Natural killer cell (primary cell): ENCODE measurements at regions of chr1 and their contacts with region 1.

Region 1: GRCh38 chr1:26541816-26542711 is 12.5 kb downstream of the RPS6KA1 start:
- DNase-seq: peak; percentile 78 to 86
- ATAC-seq: peak; percentile 65 to 84 (median 77)
- H3K4me3 ChIP-seq: peak overlapping the region; percentile 23
- H3K4me3 Mint-ChIP-seq: peak overlapping the region; percentile 87
- H3K27ac ChIP-seq: peak overlapping the region; percentile 98
- H3K27ac Mint-ChIP-seq: peak overlapping the region; percentile 99
- H3K4me1 ChIP-seq: peaks cover 98% of the 10 kb centered on the region
- H3K4me1 Mint-ChIP-seq: peaks cover 79 to 84% of the 10 kb centered on the region in 2 donors
- H3K27me3 ChIP-seq: no peaks in the 10 kb centered on the region
- H3K27me3 Mint-ChIP-seq: no peaks in the 10 kb centered on the region
- CTCF ChIP-seq: peak; percentile 52

Region 2: GRCh38 chr1:26111530-26112406 is 430.3 kb before region 1 on chr1 and contains the start of gene PDIK1L:
- intact Hi-C with region 1: loop called (anchors 10 kb)
- DNase-seq: peak; percentile 91 to 98
- ATAC-seq: peak; percentile 85 to 96 (median 88)
- H3K4me3 ChIP-seq: peak within 1 kb of the TSS; percentile 99
- H3K4me3 Mint-ChIP-seq: peak within 1 kb of the TSS; percentile 91
- H3K27ac ChIP-seq: peak within 1 kb of the TSS; percentile 66
- H3K27ac Mint-ChIP-seq: peak within 1 kb of the TSS; percentile 62 to 84
- H3K4me1 ChIP-seq: peaks cover 13% of the 10 kb centered on the region
- H3K4me1 Mint-ChIP-seq: peaks cover 13 to 14% of the 10 kb centered on the region in 2 donors
- H3K27me3 ChIP-seq: no peaks in the 10 kb centered on the region
- H3K27me3 Mint-ChIP-seq: no peaks in the 10 kb centered on the region
- CTCF ChIP-seq: no peak
- total RNA-seq, gene PDIK1L: 3.1 to 8.2 (median 8.1) TPM

Region 3: GRCh38 chr1:26459573-26460031 is 82.5 kb before region 1 on chr1:
- intact Hi-C with region 1: no loop called
- DNase-seq: no peak
- ATAC-seq: no peak
- H3K4me3 ChIP-seq: no peak overlapping the region
- H3K4me3 Mint-ChIP-seq: no peak overlapping the region
- H3K27ac ChIP-seq: no peak overlapping the region
- H3K27ac Mint-ChIP-seq: no peak overlapping the region
- H3K4me1 ChIP-seq: no peaks in the 10 kb centered on the region
- H3K4me1 Mint-ChIP-seq: no peaks in the 10 kb centered on the region
- H3K27me3 ChIP-seq: no peaks in the 10 kb centered on the region
- H3K27me3 Mint-ChIP-seq: no peaks in the 10 kb centered on the region
- CTCF ChIP-seq: no peak

Region 4: GRCh38 chr1:26477446-26478152 is 64.5 kb before region 1 on chr1:
- intact Hi-C with region 1: no loop called
- DNase-seq: no peak
- ATAC-seq: no peak
- H3K4me3 ChIP-seq: no peak overlapping the region
- H3K4me3 Mint-ChIP-seq: no peak overlapping the region
- H3K27ac ChIP-seq: no peak overlapping the region
- H3K27ac Mint-ChIP-seq: peak overlapping the region; percentile 52 to 79
- H3K4me1 ChIP-seq: peaks cover 10% of the 10 kb centered on the region
- H3K4me1 Mint-ChIP-seq: peaks cover 16 to 24% of the 10 kb centered on the region in 2 donors
- H3K27me3 ChIP-seq: no peaks in the 10 kb centered on the region
- H3K27me3 Mint-ChIP-seq: no peaks in the 10 kb centered on the region
- CTCF ChIP-seq: no peak

Region 5: GRCh38 chr1:26500488-26501175 is 41.4 kb before region 1 on chr1:
- intact Hi-C with region 1: loop called (anchors 2 kb)
- DNase-seq: peak; percentile 85 to 89
- ATAC-seq: peak; percentile 76 to 89 (median 79)
- H3K4me3 ChIP-seq: peak overlapping the region; percentile 82
- H3K4me3 Mint-ChIP-seq: peak overlapping the region; percentile 85
- H3K27ac ChIP-seq: peak overlapping the region; percentile 91
- H3K27ac Mint-ChIP-seq: peak overlapping the region; percentile 76 to 77
- H3K4me1 ChIP-seq: peaks cover 15% of the 10 kb centered on the region
- H3K4me1 Mint-ChIP-seq: peaks cover 0 to 16% of the 10 kb centered on the region in 2 donors
- H3K27me3 ChIP-seq: no peaks in the 10 kb centered on the region
- H3K27me3 Mint-ChIP-seq: no peaks in the 10 kb centered on the region
- CTCF ChIP-seq: peak; percentile 50

Region 6: DNA sequence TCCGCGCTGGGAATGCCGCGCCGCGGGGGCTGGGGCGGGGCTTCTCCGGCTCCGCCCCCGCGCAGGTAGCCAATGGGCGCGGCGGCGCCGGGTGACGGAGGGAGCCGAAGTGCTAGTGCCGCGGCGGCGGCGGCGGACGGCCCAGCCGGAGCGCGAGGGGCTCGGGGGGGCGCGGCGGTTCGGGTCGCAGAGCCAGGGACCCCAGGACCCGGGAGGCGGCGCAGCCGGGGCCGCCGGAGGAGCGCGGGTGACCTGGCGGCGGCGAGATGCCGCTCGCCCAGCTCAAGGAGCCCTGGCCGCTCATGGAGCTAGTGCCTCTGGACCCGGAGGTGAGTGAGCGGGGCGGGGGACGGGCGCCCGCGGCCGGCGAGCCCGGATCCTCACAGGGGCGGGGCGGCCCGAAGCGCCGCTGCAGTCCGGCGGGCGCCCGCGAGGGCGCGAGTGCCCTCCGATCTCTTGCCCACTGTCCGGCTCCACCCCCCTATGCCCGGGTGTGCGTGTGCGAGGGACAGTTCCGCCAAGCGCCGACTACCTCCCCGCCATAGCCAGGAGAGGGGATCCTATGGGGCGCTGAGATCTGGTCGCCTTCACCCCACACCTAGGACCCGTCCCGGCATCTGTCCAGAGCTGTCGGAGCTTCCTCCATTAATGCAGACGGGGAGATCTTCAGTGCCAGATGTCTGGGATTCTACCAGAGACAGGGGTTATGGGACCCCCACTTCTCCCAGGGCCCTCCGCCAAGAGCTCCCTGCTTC is 12.2 kb before region 1 on chr1 and contains the start of gene RPS6KA1:
- intact Hi-C with region 1: loop called (anchors 1 kb)
- DNase-seq: peak; percentile 63 to 82
- ATAC-seq: peak; percentile 86 to 93 (median 89)
- H3K4me3 ChIP-seq: peak within 1 kb of the TSS; percentile 60
- H3K4me3 Mint-ChIP-seq: peak within 1 kb of the TSS; percentile 90
- H3K27ac ChIP-seq: peak within 1 kb of the TSS; percentile 40
- H3K27ac Mint-ChIP-seq: peak within 1 kb of the TSS; percentile 78 to 89
- H3K4me1 ChIP-seq: peaks cover 32% of the 10 kb centered on the region
- H3K4me1 Mint-ChIP-seq: peaks cover 14 to 25% of the 10 kb centered on the region in 2 donors
- H3K27me3 ChIP-seq: no peaks in the 10 kb centered on the region
- H3K27me3 Mint-ChIP-seq: no peaks in the 10 kb centered on the region
- CTCF ChIP-seq: no peak
- total RNA-seq, gene RPS6KA1: 191 to 226 (median 215) TPM

Region 7: GRCh38 chr1:26695356-26696118 is 153.5 kb after region 1 on chr1 and contains the start of gene ARID1A:
- intact Hi-C with region 1: loop called (anchors 5 kb)
- DNase-seq: peak; percentile 97 to 98
- ATAC-seq: peak; percentile 63 to 83 (median 68)
- H3K4me3 ChIP-seq: peak within 1 kb of the TSS; percentile 71
- H3K4me3 Mint-ChIP-seq: peak within 1 kb of the TSS; percentile 98
- H3K27ac ChIP-seq: peak within 1 kb of the TSS; percentile 84
- H3K27ac Mint-ChIP-seq: peak within 1 kb of the TSS; percentile 91 to 98
- H3K4me1 ChIP-seq: peaks cover 32% of the 10 kb centered on the region
- H3K4me1 Mint-ChIP-seq: peaks cover 37 to 40% of the 10 kb centered on the region in 2 donors
- H3K27me3 ChIP-seq: no peaks in the 10 kb centered on the region
- H3K27me3 Mint-ChIP-seq: no peaks in the 10 kb centered on the region
- CTCF ChIP-seq: no peak
- total RNA-seq, gene ARID1A: 199 to 214 (median 202) TPM